Endothelial cell of umbilical vein (primary cell): ENCODE measurements at regions of chr17 and their contacts with region 1.

Region 1: GRCh38 chr17:16304830-16305229 is 48.4 kb downstream of the CENPV start:
- DNase-seq: peak; percentile 40
- H3K4me3 ChIP-seq: no peak overlapping the region
- H3K27ac ChIP-seq: no peak overlapping the region
- H3K4me1 ChIP-seq: no peaks in the 10 kb centered on the region
- H3K27me3 ChIP-seq: no peaks in the 10 kb centered on the region
- CTCF ChIP-seq: peak; percentile 24 to 61
- POLR2A ChIP-seq: no peak

Region 2: GRCh38 chr17:16171616-16172015 is 133.2 kb before region 1 on chr17:
- CTCF ChIA-PET with region 1: no interaction called
- POLR2A ChIA-PET with region 1: no interaction called
- dilution Hi-C with region 1: no loop called
- intact Hi-C with region 1: no loop called
- DNase-seq: no peak
- H3K4me3 ChIP-seq: no peak overlapping the region
- H3K27ac ChIP-seq: no peak overlapping the region
- H3K4me1 ChIP-seq: no peaks in the 10 kb centered on the region
- H3K27me3 ChIP-seq: no peaks in the 10 kb centered on the region
- CTCF ChIP-seq: no peak
- POLR2A ChIP-seq: no peak

Region 3: DNA sequence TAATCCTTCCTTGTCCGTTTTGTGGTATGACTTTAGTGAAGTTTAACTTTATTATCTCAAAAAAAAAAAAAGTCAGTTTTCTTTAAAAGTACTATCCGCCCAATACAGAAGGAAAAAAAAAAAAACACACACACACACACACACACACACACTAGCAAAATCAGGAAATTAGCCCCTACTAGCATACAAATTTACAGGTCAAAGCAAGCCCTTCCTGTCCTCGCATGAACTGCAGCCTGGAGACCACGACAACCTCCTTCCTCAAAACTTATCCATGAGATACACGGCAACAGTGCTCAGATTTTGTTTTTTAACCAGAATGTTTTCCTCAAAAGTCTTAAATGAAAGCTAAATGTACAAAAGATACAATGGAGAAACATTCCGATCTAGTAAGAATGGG is 105.7 kb before region 1 on chr17:
- CTCF ChIA-PET with region 1: no interaction called
- POLR2A ChIA-PET with region 1: no interaction called
- dilution Hi-C with region 1: no loop called
- intact Hi-C with region 1: no loop called
- DNase-seq: peak; percentile 71
- H3K4me3 ChIP-seq: no peak overlapping the region
- H3K27ac ChIP-seq: peak overlapping the region; percentile 37
- H3K4me1 ChIP-seq: peaks cover 17% of the 10 kb centered on the region
- H3K27me3 ChIP-seq: no peaks in the 10 kb centered on the region
- CTCF ChIP-seq: no peak
- POLR2A ChIP-seq: no peak

Region 4: DNA sequence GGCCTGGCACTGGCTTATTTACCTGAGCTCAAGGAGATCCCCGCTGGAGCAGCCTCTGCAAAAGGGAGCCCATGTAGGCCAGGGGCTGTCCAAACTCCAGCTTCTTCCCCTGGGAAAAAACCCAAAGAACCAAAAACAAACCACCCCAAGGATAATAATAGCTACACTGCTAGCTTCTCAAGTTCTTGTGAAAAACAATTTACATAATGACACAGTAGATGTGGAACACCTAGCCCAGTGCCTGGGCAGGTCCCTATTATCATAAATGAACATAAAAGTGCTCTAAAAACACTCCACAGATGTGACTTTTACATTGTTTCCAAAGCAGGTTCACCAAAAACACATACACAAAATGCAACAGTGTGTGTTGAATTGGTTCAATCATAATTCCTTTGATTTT is 21.1 kb after region 1 on chr17:
- CTCF ChIA-PET with region 1: interaction called, 23 read pairs
- POLR2A ChIA-PET with region 1: no interaction called
- dilution Hi-C with region 1: no loop called
- intact Hi-C with region 1: no loop called
- DNase-seq: no peak
- H3K4me3 ChIP-seq: no peak overlapping the region
- H3K27ac ChIP-seq: no peak overlapping the region
- H3K4me1 ChIP-seq: peaks cover 5% of the 10 kb centered on the region
- H3K27me3 ChIP-seq: no peaks in the 10 kb centered on the region
- CTCF ChIP-seq: no peak
- POLR2A ChIP-seq: no peak

Region 5: GRCh38 chr17:16353317-16354174 is 48.7 kb after region 1 on chr17 and contains the start of gene CENPV:
- CTCF ChIA-PET with region 1: interaction called, 22 read pairs
- POLR2A ChIA-PET with region 1: no interaction called
- dilution Hi-C with region 1: no loop called
- intact Hi-C with region 1: no loop called
- DNase-seq: peak; percentile 47
- H3K4me3 ChIP-seq: peak within 1 kb of the TSS; percentile 48 to 60 (median 49)
- H3K27ac ChIP-seq: peak within 1 kb of the TSS; percentile 2
- H3K4me1 ChIP-seq: peaks cover 10% of the 10 kb centered on the region
- H3K27me3 ChIP-seq: no peaks in the 10 kb centered on the region
- CTCF ChIP-seq: peak in 1 of 2 donors; percentile 9
- POLR2A ChIP-seq: no peak
- total RNA-seq, gene CENPV: 41.6 and 44.0 TPM in 2 replicates